Calu3 (cell line): ENCODE measurements at regions of chr20 and their contacts with region 1.

Region 1: DNA sequence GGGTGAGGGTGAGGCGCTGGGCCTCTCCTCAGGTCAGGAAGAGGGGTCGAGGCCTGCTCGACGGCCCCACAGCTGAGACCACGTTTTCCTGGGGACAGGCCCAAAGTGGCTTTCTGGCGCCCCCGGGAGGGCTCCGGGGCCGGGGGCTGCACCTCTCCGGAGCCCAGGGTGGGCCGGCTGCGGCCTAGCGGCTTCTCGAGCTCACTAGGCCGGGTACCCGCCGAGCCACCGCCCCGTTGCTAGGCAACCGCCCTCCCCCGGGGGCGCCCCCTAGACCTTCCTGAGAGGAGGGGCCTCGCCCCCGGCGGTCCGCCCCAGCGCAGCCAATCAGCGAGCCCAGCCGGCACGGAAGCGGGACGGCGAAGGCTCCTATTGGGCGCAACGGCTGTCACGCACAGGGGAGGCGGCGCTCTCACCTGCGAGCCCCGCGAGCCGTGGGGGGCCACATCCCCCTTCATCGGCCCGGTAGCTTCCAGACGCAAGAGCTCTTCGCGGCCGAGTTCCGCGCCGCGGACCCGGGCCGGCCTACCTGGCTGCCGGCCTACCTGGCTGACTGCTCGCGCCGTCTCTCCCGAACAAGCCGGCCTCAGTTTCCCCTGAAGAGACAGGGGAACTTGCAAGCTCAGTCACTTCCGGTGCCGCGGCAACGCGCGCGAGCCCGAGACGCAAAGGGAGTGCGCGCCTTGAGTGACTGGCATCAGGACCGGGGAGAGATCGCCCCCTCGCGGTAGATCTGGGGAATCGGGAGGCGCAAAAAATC is 831 bp upstream of the BCL2L1 start:
- DNase-seq: peak; percentile 100
- H3K4me3 Mint-ChIP-seq: peak overlapping the region; percentile 97
- H3K27ac Mint-ChIP-seq: peak overlapping the region; percentile 94
- H3K4me1 Mint-ChIP-seq: peaks cover 21% of the 10 kb centered on the region
- H3K27me3 Mint-ChIP-seq: no peaks in the 10 kb centered on the region
- CTCF ChIP-seq: peak; percentile 97

Region 2: GRCh38 chr20:31560094-31560899 is 163.2 kb before region 1 on chr20:
- CTCF ChIA-PET with region 1: interaction called, 16 read pairs
- intact Hi-C with region 1: loop called (anchors 5 kb)
- DNase-seq: peak; percentile 92
- H3K4me3 Mint-ChIP-seq: peak overlapping the region; percentile 49
- H3K27ac Mint-ChIP-seq: peak overlapping the region; percentile 98
- H3K4me1 Mint-ChIP-seq: peaks cover 57% of the 10 kb centered on the region
- H3K27me3 Mint-ChIP-seq: no peaks in the 10 kb centered on the region
- CTCF ChIP-seq: peak; percentile 99

Region 3: GRCh38 chr20:31641391-31641790 is 82.1 kb before region 1 on chr20:
- CTCF ChIA-PET with region 1: interaction called, 15 read pairs
- intact Hi-C with region 1: no loop called
- DNase-seq: no peak
- H3K4me3 Mint-ChIP-seq: no peak overlapping the region
- H3K27ac Mint-ChIP-seq: no peak overlapping the region
- H3K4me1 Mint-ChIP-seq: no peaks in the 10 kb centered on the region
- H3K27me3 Mint-ChIP-seq: peaks cover 13% of the 10 kb centered on the region
- CTCF ChIP-seq: no peak

Region 4: DNA sequence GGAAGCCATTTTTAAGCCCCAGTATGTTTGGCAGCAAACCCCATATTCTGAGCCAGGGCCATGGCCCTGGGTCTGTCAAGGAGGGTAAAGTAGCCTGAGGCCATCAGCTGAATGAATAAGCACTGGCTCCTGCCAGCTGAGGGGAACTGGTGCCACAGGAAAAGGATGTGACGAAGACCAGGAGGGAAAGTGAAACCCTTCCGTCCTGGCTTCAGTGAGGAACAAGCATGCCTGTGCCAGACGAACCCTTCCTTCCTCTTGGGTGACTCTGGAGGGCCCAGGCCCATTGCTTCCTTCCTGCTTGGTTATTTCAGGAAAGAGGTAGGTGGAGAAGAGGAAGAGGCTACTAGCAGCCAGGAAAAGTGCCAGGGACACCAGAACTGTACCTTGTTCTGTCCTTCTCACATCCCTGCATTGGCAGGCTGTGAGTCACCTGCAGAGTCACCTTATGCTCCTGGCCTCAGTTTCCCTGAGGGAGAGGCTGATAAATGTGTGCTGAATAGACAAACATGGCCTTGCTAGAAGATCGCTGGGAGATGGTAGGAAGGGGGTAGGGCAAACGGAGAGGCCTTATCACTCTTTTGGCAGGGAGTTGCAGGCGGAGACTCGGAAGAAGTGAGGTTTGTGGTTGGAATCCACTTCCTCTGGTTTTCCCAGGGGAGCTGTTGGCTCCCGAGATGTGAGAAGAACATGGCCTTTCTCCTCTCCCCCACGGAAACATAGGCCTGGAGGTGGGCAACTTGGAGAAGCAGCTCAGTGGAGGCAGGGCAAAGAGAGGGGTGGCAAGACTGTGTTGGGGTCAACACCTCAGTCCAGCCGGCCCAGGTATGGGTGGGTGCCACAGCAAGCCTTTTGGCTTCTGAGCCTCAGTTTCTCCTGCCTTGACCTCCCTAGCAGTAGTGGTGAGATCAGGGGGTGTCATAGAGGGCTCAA is 48.3 kb before region 1 on chr20:
- CTCF ChIA-PET with region 1: interaction called, 6 read pairs
- intact Hi-C with region 1: loop called (anchors 5 kb)
- DNase-seq: peak; percentile 35
- H3K4me3 Mint-ChIP-seq: peak overlapping the region; percentile 35
- H3K27ac Mint-ChIP-seq: peak overlapping the region; percentile 78
- H3K4me1 Mint-ChIP-seq: peaks cover 83% of the 10 kb centered on the region
- H3K27me3 Mint-ChIP-seq: no peaks in the 10 kb centered on the region
- CTCF ChIP-seq: no peak

Region 5: GRCh38 chr20:31691646-31692275 is 31.7 kb before region 1 on chr20:
- CTCF ChIA-PET with region 1: interaction called, 22 read pairs
- intact Hi-C with region 1: loop called (anchors 1 kb)
- DNase-seq: no peak
- H3K4me3 Mint-ChIP-seq: peak overlapping the region; percentile 48
- H3K27ac Mint-ChIP-seq: peak overlapping the region; percentile 82
- H3K4me1 Mint-ChIP-seq: peaks cover 78% of the 10 kb centered on the region
- H3K27me3 Mint-ChIP-seq: no peaks in the 10 kb centered on the region
- CTCF ChIP-seq: no peak

Region 6: GRCh38 chr20:31704225-31705119 is 19.0 kb before region 1 on chr20:
- CTCF ChIA-PET with region 1: interaction called, 84 read pairs
- intact Hi-C with region 1: loop called (anchors 2 kb)
- DNase-seq: peak; percentile 97
- H3K4me3 Mint-ChIP-seq: peak overlapping the region; percentile 29
- H3K27ac Mint-ChIP-seq: peak overlapping the region; percentile 91
- H3K4me1 Mint-ChIP-seq: peaks cover 85% of the 10 kb centered on the region
- H3K27me3 Mint-ChIP-seq: no peaks in the 10 kb centered on the region
- CTCF ChIP-seq: no peak

Region 7: GRCh38 chr20:31738729-31739561 is 15.4 kb after region 1 on chr20 and contains the start of gene TPX2:
- CTCF ChIA-PET with region 1: interaction called, 25 read pairs
- intact Hi-C with region 1: no loop called
- DNase-seq: peak; percentile 97
- H3K4me3 Mint-ChIP-seq: no peak within 1 kb of the TSS
- H3K27ac Mint-ChIP-seq: no peak within 1 kb of the TSS
- H3K4me1 Mint-ChIP-seq: peaks cover 11% of the 10 kb centered on the region
- H3K27me3 Mint-ChIP-seq: no peaks in the 10 kb centered on the region
- CTCF ChIP-seq: no peak
- total RNA-seq, gene TPX2: 157 and 179 TPM in 2 replicates

Region 8: GRCh38 chr20:32052090-32052777 is 328.7 kb after region 1 on chr20 and contains the start of gene HCK:
- CTCF ChIA-PET with region 1: no interaction called
- intact Hi-C with region 1: no loop called
- DNase-seq: no peak
- H3K4me3 Mint-ChIP-seq: no peak within 1 kb of the TSS
- H3K27ac Mint-ChIP-seq: no peak within 1 kb of the TSS
- H3K4me1 Mint-ChIP-seq: no peaks in the 10 kb centered on the region
- H3K27me3 Mint-ChIP-seq: peaks cover 95% of the 10 kb centered on the region
- CTCF ChIP-seq: no peak
- total RNA-seq, gene HCK: not detected in 2 replicates